ENCODE measurements at regions of chr14 and their contacts with region 1.

Region 1: DNA sequence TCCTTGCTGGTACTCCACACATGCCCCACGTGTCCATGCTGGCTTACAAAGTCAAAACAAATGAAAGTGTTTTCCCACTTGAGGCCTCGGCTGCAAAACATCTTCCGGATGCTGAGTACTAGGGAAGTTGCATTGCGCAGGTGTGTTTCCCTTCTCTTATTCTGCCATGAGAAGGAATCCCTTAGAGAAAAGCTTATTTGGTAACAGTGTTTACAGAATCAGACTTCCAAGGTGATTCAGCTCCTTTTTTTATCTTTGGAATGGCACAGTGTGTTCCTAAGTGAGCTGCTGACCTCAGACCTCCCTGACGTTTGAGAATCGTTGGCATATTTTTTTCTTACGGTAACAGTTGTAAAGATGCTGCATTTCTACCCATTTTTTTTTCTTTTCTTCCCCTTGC is 211.3 kb downstream of the ESR2 start:
- DNase-seq: peak; percentile 92
- H3K4me3 Mint-ChIP-seq: peak overlapping the region; percentile 56
- H3K27ac Mint-ChIP-seq: peak overlapping the region; percentile 96
- H3K4me1 Mint-ChIP-seq: peaks cover 33% of the 10 kb centered on the region
- H3K27me3 Mint-ChIP-seq: no peaks in the 10 kb centered on the region
- CTCF ChIP-seq: no peak

Region 2: DNA sequence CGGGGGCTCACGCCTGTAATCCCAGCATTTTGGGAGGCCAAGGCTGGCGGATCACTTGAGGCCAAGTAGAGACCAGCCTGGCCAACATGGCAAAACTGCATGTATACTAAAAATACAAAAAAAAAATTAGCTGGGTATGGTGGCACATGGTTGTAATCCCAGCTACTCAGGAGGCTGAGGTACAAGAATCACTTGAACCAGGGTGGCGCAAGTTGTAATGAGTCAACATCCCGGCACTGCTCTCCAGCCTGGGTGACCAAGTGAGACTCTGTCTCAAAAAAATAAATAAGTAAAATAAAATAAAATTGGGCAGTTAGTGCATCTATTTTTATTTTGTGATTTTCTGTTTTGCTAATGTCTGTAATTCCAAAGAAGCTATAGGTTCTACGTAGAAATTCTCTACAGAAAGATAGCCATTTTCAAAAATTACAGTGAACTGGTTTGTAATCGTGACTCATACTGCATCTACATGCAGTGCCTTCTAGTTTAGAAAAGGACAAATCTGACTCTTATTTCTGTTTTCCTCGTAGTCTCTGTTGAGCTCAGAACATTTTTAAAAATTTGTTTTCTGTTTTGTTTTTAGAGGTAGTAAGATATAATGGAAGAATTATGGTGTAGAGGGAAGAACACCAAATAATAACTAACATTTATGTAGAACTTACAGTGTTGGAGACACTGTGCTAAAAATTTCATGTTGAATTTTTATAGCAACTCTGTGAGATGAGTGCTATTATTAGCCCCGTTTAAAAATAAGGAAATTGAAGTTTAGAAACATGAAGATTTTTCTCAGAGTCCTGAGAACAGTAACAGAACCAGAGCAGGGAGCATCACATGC is 28.9 kb before region 1 on chr14:
- CTCF ChIA-PET with region 1: interaction called, 3 read pairs
- POLR2A ChIA-PET with region 1: interaction called, 121 read pairs
- intact Hi-C with region 1: no loop called
- DNase-seq: peak; percentile 89
- H3K4me3 Mint-ChIP-seq: peak overlapping the region; percentile 57
- H3K27ac Mint-ChIP-seq: peak overlapping the region; percentile 92
- H3K4me1 Mint-ChIP-seq: peaks cover 19% of the 10 kb centered on the region
- H3K27me3 Mint-ChIP-seq: no peaks in the 10 kb centered on the region
- CTCF ChIP-seq: no peak

Region 3: DNA sequence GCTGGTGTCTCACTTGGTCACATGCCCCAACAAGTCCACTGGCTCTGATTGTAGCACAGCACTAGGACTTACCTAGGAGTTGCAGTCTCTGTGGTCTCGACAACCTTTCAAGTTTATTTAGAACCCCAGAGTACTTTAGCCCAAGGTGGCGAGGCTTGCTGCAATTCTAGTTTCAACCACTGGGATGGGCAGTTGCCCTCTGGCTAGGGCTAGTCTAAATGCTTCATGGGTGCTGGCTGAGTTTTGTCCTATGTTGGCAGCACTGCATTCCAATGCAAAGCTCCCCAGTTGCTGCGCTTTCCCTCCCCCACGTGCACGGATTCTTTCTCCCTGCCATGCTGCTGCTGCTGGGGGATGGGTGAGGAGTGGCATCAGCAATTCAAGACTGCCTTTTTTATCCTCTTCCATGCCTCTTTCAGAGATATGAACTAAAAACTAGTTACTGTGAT is 22.2 kb before region 1 on chr14:
- CTCF ChIA-PET with region 1: interaction called, 12 read pairs
- POLR2A ChIA-PET with region 1: interaction called, 121 read pairs
- intact Hi-C with region 1: no loop called
- DNase-seq: peak; percentile 95
- H3K4me3 Mint-ChIP-seq: no peak overlapping the region
- H3K27ac Mint-ChIP-seq: peak overlapping the region; percentile 98
- H3K4me1 Mint-ChIP-seq: peaks cover 17% of the 10 kb centered on the region
- H3K27me3 Mint-ChIP-seq: no peaks in the 10 kb centered on the region
- CTCF ChIP-seq: peak; percentile 62

Region 4: DNA sequence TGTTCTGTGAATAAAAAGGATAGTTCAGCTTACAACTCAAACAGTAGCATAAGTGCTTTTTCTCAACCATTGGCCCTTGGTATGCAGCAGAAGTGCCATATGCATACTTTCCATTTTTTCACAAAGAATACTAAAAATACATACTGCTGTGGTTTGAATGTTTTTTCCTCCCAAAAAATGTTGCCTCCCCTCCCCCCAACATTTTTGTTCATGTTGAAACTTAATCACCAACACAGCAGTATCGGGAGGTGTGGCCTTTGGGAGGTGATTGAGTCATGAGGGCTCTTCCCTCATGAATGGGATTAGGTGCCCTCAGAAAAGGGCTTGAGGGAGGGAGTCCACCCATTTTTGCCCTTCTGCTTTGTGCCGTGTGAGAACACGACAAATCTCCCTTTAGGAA is 12.8 kb after region 1 on chr14:
- CTCF ChIA-PET with region 1: no interaction called
- POLR2A ChIA-PET with region 1: interaction called, 12 read pairs
- intact Hi-C with region 1: no loop called
- DNase-seq: peak; percentile 72
- H3K4me3 Mint-ChIP-seq: no peak overlapping the region
- H3K27ac Mint-ChIP-seq: no peak overlapping the region
- H3K4me1 Mint-ChIP-seq: no peaks in the 10 kb centered on the region
- H3K27me3 Mint-ChIP-seq: no peaks in the 10 kb centered on the region
- CTCF ChIP-seq: no peak

Region 5: DNA sequence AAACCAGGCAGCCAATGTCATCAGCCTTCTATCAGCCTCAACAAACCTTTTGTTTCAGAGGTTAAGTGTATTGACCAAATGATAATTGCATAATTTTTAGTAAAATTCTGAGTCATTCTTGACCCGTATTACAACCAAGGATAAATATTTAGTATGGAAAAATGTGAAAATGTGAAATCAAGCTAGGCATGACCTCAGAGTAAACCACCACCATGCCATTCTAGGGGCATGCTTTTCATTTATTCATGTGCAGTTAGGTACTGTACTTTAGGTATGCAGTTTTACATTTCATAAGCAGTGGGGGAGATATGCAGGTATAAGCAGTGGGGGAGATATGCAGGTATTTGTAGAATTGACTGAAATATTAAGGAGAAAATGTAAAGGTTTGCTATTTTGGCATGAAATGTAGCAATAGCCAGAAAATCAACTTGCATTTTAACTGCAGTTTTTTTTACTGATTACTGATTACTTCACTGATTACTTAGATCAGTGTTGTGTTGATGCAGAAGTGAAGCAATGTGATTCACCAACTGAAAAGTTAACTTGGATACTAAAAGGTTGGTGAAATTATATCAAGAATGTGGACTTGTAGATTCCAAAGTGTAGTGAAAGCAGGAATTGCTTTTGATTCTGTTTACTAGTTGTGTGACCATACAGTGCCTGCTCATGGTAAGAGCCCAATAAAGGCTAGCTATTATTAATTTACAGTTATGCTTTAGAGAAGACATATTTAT is 27.2 kb after region 1 on chr14:
- CTCF ChIA-PET with region 1: interaction called, 6 read pairs
- POLR2A ChIA-PET with region 1: interaction called, 121 read pairs
- intact Hi-C with region 1: loop called (anchors 5 kb)
- DNase-seq: peak; percentile 47
- H3K4me3 Mint-ChIP-seq: peak overlapping the region; percentile 7
- H3K27ac Mint-ChIP-seq: peak overlapping the region; percentile 98
- H3K4me1 Mint-ChIP-seq: peaks cover 53% of the 10 kb centered on the region
- H3K27me3 Mint-ChIP-seq: no peaks in the 10 kb centered on the region
- CTCF ChIP-seq: no peak

Region 6: GRCh38 chr14:64117671-64118402 is 35.0 kb after region 1 on chr14:
- CTCF ChIA-PET with region 1: interaction called, 6 read pairs
- POLR2A ChIA-PET with region 1: interaction called, 121 read pairs
- intact Hi-C with region 1: loop called (anchors 5 kb)
- DNase-seq: peak; percentile 89
- H3K4me3 Mint-ChIP-seq: peak overlapping the region; percentile 67
- H3K27ac Mint-ChIP-seq: peak overlapping the region; percentile 98
- H3K4me1 Mint-ChIP-seq: peaks cover 50% of the 10 kb centered on the region
- H3K27me3 Mint-ChIP-seq: no peaks in the 10 kb centered on the region
- CTCF ChIP-seq: no peak

Region 7: DNA sequence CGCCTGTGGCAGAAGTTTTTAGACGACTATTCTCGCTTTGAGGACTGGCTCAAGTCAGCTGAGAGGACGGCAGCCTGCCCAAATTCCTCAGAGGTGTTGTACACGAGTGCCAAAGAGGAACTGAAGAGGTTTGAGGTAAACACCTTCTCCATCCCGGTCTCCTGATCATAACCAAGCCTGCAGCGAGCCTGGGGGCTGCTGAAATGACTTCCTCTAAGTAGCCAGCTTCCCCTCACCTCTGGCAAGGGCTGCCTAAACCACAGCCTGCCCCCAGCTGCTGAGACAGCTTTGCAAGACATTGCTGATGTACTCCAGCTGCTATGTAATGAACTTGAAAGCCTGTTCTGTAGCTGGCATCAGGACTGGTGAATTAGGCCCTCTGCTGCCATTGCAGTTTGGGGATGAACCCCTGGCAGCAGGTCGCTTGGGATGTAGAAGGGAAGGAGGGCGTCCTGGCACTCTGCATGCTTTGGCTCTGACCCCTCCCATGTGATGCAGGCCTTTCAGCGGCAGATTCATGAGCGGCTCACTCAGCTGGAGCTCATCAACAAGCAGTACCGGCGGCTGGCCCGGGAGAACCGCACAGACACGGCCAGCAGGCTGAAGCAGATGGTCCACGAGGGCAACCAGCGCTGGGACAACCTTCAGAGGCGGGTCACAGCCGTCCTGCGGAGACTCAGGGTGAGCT is 126.8 kb after region 1 on chr14:
- CTCF ChIA-PET with region 1: no interaction called
- POLR2A ChIA-PET with region 1: no interaction called
- intact Hi-C with region 1: no loop called
- DNase-seq: no peak
- H3K4me3 Mint-ChIP-seq: no peak overlapping the region
- H3K27ac Mint-ChIP-seq: no peak overlapping the region
- H3K4me1 Mint-ChIP-seq: no peaks in the 10 kb centered on the region
- H3K27me3 Mint-ChIP-seq: no peaks in the 10 kb centered on the region
- CTCF ChIP-seq: no peak

Region 8: GRCh38 chr14:65222440-65222858 is 1139.6 kb after region 1 on chr14:
- CTCF ChIA-PET with region 1: no interaction called
- POLR2A ChIA-PET with region 1: no interaction called
- intact Hi-C with region 1: no loop called
- DNase-seq: peak; percentile 71
- H3K4me3 Mint-ChIP-seq: no peak overlapping the region
- H3K27ac Mint-ChIP-seq: peak overlapping the region; percentile 77
- H3K4me1 Mint-ChIP-seq: peaks cover 27% of the 10 kb centered on the region
- H3K27me3 Mint-ChIP-seq: no peaks in the 10 kb centered on the region
- CTCF ChIP-seq: peak; percentile 88

Measured in MCF 10A (cell line).